ENCODE measurements at regions of chr11 and their contacts with region 1.

Region 1: GRCh38 chr11:64148200-64148916 is 17.6 kb downstream of the MACROD1 start:
- DNase-seq: peak; percentile 27
- ATAC-seq: peak; percentile 60
- H3K4me3 ChIP-seq: no peak overlapping the region
- H3K27ac ChIP-seq: no peak overlapping the region
- H3K4me1 ChIP-seq: peaks cover 0 to 10% of the 10 kb centered on the region in 2 experiments; a peak in 2 of 4 replicates
- H3K27me3 ChIP-seq: no peaks in the 10 kb centered on the region
- CTCF ChIP-seq: peak; percentile 86 to 96 (median 92); a peak in 5 of 6 replicates
- POLR2A ChIP-seq: no peak
- RAD21 ChIP-seq: peak; percentile 90

Region 2: DNA sequence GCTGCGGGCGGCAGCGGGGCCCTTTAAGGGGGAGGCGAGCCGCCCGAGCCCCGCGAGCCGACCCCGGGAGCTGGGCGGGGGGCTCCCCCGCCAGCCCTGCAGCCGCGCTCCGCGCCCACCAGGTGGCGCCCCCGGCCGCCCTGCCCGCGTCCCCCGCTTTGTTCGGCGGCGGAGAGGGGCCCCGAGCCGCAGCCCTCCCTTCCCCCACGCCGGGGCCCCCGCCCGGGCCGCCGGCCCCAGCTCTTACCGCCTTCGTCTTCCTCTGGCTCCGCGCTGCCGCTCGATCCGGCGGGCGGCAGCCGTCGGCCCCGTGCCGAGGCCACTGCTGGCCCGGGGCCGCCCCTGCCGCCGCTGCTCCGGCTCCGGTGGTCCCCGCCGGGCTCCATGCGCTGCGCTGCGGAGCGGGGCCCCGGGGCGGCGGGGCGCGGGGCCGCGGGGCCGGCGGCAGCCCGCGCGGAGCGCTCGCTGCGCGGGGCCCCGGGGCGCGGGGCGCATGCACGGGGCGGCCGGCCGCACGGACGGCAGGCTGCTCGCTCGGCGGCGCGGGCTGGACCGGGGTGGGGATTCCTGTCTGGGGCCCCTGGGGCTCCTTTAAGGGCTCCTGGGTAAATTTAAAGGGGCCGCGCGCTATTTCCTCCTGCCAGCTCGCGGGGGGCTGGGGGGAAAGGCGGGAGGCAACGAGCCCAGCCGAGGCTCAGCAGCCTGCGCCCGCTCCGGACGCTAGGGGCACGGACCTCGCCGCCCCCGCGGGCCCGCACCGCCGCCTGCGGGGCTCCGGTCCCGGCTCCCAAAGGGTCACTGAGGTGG is 379.9 kb before region 1 on chr11 and contains the start of gene ZFTA:
- CTCF ChIA-PET with region 1: no interaction called
- POLR2A ChIA-PET with region 1: no interaction called
- RAD21 ChIA-PET with region 1: no interaction called
- intact Hi-C with region 1: loop called (anchors 5 kb)
- DNase-seq: no peak
- ATAC-seq: peak; percentile 74
- H3K4me3 ChIP-seq: peak within 1 kb of the TSS; percentile 78 to 88
- H3K27ac ChIP-seq: peak within 1 kb of the TSS; percentile 90
- H3K4me1 ChIP-seq: peaks cover 14 to 29% of the 10 kb centered on the region in 2 experiments
- H3K27me3 ChIP-seq: no peaks in the 10 kb centered on the region
- CTCF ChIP-seq: peak in 1 of 3 experiments; percentile 43; a peak in 4 of 6 replicates
- POLR2A ChIP-seq: no peak
- RAD21 ChIP-seq: peak; percentile 58
- total RNA-seq, gene ZFTA: 14.7 TPM

Region 3: DNA sequence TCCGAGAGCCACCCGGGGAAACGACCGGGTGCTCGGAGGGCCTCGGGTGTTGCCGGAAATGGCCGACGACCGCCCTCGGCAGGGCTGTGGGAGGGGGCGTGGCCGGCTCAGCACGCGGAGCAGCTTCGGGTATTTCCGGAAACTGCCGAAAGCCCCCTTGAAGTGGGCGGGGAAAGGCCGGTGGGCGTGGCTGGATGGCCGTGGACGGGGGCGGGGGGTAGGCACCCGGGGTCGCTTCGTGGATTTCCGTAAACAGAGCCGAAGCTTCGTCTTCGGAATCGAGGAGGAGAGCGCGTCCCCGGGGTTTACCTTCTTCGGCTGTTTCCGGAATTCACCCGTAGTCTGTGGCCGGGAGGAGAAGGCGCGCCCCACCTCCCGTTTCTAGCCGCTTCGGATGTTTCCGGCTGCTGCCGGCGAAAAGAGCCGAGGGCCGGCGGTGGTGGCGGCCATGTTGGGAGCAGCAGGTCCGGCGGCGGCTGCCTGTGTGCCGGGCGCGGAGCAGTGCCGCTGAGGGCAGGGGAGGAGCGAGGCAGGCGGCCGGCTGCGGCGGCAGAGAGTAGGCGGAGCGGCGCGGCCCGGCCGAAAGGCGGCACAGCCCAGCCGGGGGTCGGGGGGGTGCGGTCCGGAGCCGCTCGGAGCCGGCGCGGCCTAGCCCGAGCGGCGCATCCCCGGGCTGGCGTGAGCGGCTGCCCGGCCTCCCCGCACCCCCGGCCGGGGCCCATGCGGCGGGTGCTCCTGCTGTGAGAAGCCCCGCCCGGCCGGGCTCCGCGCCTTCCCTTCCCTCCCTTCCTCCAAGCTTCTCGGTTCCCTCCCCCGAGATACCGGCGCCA is 309.5 kb before region 1 on chr11 and contains the start of gene MARK2:
- CTCF ChIA-PET with region 1: interaction called, 7 read pairs
- POLR2A ChIA-PET with region 1: no interaction called
- RAD21 ChIA-PET with region 1: no interaction called
- intact Hi-C with region 1: loop called (anchors 2 kb)
- DNase-seq: peak; percentile 97
- ATAC-seq: peak; percentile 90
- H3K4me3 ChIP-seq: peak within 1 kb of the TSS; percentile 96 to 98
- H3K27ac ChIP-seq: peak within 1 kb of the TSS; percentile 79
- H3K4me1 ChIP-seq: peaks cover 30 to 55% of the 10 kb centered on the region in 2 experiments
- H3K27me3 ChIP-seq: no peaks in the 10 kb centered on the region
- CTCF ChIP-seq: no peak
- POLR2A ChIP-seq: peak; percentile 18
- RAD21 ChIP-seq: no peak
- total RNA-seq, gene MARK2: 39.8 TPM

Region 4: GRCh38 chr11:63945477-63946163 is 202.7 kb before region 1 on chr11:
- CTCF ChIA-PET with region 1: interaction called, 5 read pairs
- POLR2A ChIA-PET with region 1: no interaction called
- RAD21 ChIA-PET with region 1: no interaction called
- intact Hi-C with region 1: loop called (anchors 2 kb)
- DNase-seq: peak; percentile 36
- ATAC-seq: peak; percentile 97
- H3K4me3 ChIP-seq: no peak overlapping the region
- H3K27ac ChIP-seq: peak overlapping the region; percentile 3
- H3K4me1 ChIP-seq: peaks cover 0 to 12% of the 10 kb centered on the region in 2 experiments; a peak in 2 of 4 replicates
- H3K27me3 ChIP-seq: no peaks in the 10 kb centered on the region
- CTCF ChIP-seq: peak; percentile 65 to 87 (median 75)
- POLR2A ChIP-seq: no peak
- RAD21 ChIP-seq: peak; percentile 93

Region 5: DNA sequence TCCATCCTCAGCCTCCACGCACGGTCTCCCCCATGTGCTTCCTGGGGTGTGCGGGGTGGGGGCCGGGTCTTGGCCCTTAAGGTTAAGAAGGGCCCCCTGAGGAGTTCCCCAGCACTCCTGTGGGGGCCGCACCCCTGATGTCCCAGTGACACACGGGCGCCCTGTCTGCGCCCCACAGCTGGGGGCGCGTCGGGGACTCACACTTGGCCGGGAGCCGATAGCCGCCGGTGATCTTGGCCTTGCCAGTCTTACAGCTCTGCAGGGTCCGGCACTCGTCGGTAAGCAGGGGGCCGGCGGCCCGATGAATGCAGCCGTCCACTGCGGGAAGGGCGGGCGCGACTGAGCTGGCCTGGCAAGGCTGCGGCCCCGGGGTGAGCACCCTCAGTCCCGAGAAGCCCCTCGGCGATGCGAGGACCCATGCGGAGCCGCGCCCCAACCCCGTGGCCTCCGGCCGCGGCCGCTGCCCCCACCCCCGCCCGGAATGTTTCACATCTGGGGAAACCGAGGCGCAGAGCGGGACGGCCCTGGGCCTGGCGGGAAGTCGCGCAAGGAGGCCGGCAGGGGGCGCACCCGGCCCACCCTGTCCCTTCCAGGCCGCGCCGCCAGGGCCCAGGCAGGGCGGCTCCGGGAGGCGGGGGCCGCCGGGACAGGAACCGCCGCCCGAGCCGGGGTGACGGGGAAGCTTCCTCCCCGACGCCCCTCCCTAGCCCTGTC is 148.2 kb before region 1 on chr11:
- CTCF ChIA-PET with region 1: no interaction called
- POLR2A ChIA-PET with region 1: no interaction called
- RAD21 ChIA-PET with region 1: no interaction called
- intact Hi-C with region 1: loop called (anchors 10 kb)
- DNase-seq: no peak
- ATAC-seq: no peak
- H3K4me3 ChIP-seq: no peak overlapping the region
- H3K27ac ChIP-seq: no peak overlapping the region
- H3K4me1 ChIP-seq: peaks cover 0 to 5% of the 10 kb centered on the region in 2 experiments; a peak in 1 of 4 replicates
- H3K27me3 ChIP-seq: no peaks in the 10 kb centered on the region
- CTCF ChIP-seq: no peak
- POLR2A ChIP-seq: no peak
- RAD21 ChIP-seq: no peak

Region 6: DNA sequence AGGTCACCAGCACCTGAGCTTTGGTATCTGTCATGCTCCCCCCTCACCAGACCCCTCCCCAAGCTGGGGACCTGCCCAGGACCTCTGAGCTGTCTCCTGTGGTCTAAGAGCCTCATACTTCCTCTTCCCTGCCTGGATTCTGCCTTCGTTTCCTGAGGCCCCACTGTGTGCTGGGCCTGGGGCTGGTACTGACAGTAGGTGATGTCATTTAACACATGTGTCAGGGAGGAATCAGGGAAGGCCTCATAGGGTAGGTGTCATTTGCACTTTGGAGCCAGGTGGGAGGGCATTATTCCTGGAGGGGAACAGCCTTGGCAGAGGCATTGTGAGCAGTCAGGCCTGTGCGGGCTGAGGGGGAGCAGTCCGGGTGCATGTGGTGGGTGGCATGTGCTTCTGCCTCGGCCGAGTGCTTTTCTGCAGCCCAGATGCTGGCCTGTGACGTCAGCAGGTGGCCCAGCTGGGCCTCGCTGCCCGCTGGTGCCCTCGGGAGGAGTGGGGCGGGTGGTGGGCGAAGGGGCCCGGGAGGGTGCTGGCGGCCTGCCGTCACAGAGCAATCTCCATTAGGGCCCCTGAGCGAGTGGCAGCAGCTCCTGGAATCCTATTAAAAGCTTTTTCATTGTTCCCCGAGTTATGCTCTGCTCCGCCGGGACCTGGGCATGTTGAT is 103.5 kb before region 1 on chr11:
- CTCF ChIA-PET with region 1: no interaction called
- POLR2A ChIA-PET with region 1: no interaction called
- RAD21 ChIA-PET with region 1: no interaction called
- intact Hi-C with region 1: loop called (anchors 5 kb)
- DNase-seq: no peak
- ATAC-seq: no peak
- H3K4me3 ChIP-seq: no peak overlapping the region
- H3K27ac ChIP-seq: no peak overlapping the region
- H3K4me1 ChIP-seq: no peaks in the 10 kb centered on the region
- H3K27me3 ChIP-seq: no peaks in the 10 kb centered on the region
- CTCF ChIP-seq: no peak
- POLR2A ChIP-seq: no peak
- RAD21 ChIP-seq: no peak

Region 7: DNA sequence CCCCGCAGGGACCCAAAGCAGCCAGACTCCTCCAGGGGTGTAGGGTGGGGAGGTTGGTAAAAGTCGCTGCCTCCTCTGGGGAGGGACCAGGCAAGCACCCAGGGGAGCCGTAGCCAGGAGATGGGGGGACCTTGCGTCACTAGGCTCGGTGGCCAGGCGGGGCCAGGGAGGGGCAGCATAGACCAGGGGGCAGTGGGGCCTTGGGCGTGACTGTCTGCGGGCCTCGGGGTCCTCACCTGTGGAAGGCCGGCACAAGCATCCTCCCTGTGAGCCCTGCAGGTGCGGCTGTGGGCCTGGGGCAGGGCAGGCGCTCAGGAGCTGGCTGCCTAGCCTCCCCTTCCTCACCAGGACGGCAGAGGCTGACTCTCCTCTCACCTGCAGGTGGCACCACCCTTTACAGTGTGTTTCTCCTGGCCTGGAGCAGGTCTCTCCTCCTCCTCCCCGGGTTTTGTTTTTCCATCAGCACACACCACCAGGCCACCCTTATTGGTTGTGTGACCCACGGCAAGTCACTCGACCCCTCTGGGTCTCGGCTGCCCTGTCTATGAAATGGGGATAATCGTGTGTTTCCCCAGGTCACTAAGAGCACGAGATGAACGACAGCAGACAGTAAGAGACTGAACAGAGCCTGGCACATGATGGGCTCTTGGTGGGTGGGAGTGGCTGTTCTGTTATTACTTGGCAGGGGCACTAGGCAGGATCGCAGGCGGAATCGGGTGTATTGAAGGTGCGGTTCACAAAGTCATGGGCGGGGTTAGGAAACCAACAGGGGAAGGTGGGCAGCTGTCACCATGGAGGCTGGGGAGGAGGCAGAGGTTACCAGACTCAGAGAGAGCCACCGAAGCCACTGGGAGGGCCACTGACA is 60.0 kb before region 1 on chr11:
- CTCF ChIA-PET with region 1: no interaction called
- POLR2A ChIA-PET with region 1: no interaction called
- RAD21 ChIA-PET with region 1: no interaction called
- intact Hi-C with region 1: loop called (anchors 2 kb)
- DNase-seq: peak; percentile 6
- ATAC-seq: peak; percentile 77
- H3K4me3 ChIP-seq: no peak overlapping the region
- H3K27ac ChIP-seq: no peak overlapping the region; the same call in 1 of the 2 replicates
- H3K4me1 ChIP-seq: peaks cover 3% of the 10 kb centered on the region in 2 experiments; a peak in 3 of 4 replicates
- H3K27me3 ChIP-seq: no peaks in the 10 kb centered on the region
- CTCF ChIP-seq: peak in 2 of 3 experiments; percentile 53 to 62; a peak in 4 of 6 replicates
- POLR2A ChIP-seq: no peak
- RAD21 ChIP-seq: no peak

Region 8: GRCh38 chr11:64230171-64230984 is 82.0 kb after region 1 on chr11 and contains the start of gene DNAJC4:
- CTCF ChIA-PET with region 1: no interaction called
- POLR2A ChIA-PET with region 1: no interaction called
- RAD21 ChIA-PET with region 1: no interaction called
- intact Hi-C with region 1: no loop called
- DNase-seq: peak; percentile 89
- ATAC-seq: peak; percentile 41
- H3K4me3 ChIP-seq: peak within 1 kb of the TSS; percentile 71 to 89
- H3K27ac ChIP-seq: peak within 1 kb of the TSS; percentile 61
- H3K4me1 ChIP-seq: peaks cover 27 to 67% of the 10 kb centered on the region in 2 experiments
- H3K27me3 ChIP-seq: no peaks in the 10 kb centered on the region
- CTCF ChIP-seq: no peak
- POLR2A ChIP-seq: no peak
- RAD21 ChIP-seq: no peak
- total RNA-seq, gene DNAJC4: 25.8 TPM

Measured in HCT116 (cell line).